Left lung (tissue), 14 donors: ENCODE measurements at regions of chr1 and their contacts with region 1.

Region 1: DNA sequence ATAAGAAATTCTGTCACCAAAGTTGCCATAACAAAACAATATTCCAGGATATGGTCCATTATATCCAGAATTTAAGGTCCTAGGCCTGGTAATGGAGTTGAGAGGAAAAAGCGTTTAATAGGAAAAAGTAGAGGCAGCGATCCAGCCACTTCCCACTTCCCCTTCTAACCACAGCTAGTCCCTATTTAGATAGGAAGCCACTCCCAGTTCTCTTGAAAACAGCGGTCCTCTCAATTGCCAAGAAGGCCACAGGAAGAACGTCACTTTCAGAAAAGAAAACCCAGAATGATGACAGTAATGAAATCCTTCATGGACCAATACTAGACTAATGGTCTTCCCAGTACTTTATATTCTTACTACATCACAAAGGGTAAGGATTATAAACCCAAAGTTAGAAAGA is 38.6 kb downstream of the ABL2 start:
- DNase-seq: no peak
- ATAC-seq: peak; percentile 76
- H3K4me3 ChIP-seq: no peak overlapping the region
- H3K27ac ChIP-seq: peak overlapping the region; percentile 57 to 73
- H3K4me1 ChIP-seq: peaks cover 0 to 28% of the 10 kb centered on the region in 2 donors
- H3K27me3 ChIP-seq: no peaks in the 10 kb centered on the region
- CTCF ChIP-seq: no peak

Region 2: GRCh38 chr1:178224358-178224757 is 966.5 kb before region 1 on chr1:
- intact Hi-C with region 1: no loop called
- DNase-seq: no peak
- ATAC-seq: no peak
- H3K4me3 ChIP-seq: no peak overlapping the region
- H3K27ac ChIP-seq: no peak overlapping the region
- H3K4me1 ChIP-seq: peaks cover 0 to 3% of the 10 kb centered on the region in 2 donors
- H3K27me3 ChIP-seq: no peaks in the 10 kb centered on the region
- CTCF ChIP-seq: no peak

Region 3: DNA sequence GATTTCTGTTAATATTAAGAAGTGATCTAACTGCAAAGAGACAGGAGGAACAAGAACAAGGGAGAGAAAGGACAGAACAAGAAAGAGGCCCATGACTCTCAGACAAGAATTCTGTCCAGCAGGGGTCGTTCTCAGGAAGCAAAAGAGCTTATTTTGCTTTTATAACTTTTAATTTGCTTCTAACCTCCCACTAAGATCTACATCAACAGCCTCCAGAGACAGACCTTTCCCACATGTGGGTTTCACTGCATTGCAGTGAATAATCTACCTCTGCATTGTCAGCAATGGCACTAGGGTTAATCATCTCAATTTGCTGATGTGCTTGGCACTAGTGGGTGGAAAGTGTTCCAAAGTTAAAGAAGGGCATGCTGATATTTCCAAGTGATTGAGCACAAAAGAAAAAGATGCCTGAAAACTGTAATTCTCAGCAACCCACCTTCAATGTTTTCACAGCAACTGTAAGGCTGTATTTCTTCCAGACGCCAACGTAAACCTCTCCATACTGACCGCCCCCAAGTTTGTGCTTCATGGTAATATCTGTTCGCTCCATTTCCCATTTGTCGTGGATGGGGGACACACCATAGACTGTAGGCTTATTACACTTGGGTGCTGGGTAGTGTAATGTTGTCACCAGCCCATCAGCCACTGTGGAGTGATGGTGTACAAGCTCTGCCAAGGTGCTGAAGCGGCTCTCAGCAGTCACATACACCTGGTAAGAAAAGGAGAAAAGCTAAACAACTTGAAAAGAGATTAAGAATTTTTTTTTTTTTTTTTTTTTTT is 69.5 kb before region 1 on chr1:
- intact Hi-C with region 1: loop called in 1 of 2 experiments (anchors 5 kb)
- DNase-seq: peak in 2 of 4 donors; percentile 28 to 53
- ATAC-seq: peak; percentile 45
- H3K4me3 ChIP-seq: no peak overlapping the region
- H3K27ac ChIP-seq: no peak overlapping the region
- H3K4me1 ChIP-seq: peaks cover 0 to 2% of the 10 kb centered on the region in 2 donors
- H3K27me3 ChIP-seq: no peaks in the 10 kb centered on the region
- CTCF ChIP-seq: peak; percentile 33 to 43

Region 4: DNA sequence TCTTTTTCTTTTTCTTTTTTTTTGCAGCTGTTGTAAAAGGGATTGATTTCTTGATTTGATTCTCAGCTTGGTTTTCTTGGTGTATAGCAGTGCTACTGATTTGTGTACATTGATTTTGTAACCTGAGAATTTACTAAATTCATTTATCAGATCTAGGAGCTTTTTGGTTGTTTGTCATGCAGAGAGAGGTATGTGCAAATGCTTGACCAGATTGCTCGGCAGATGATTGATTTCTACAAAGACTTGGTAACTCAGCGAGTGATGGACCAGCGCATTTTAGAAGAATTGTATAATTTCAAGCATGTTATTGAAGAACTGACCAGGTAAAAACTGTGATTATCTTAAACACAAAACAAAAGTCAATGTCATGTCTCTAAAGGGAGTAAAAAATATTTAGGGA is 202.9 kb after region 1 on chr1:
- intact Hi-C with region 1: no loop called
- DNase-seq: no peak
- ATAC-seq: no peak
- H3K4me3 ChIP-seq: no peak overlapping the region
- H3K27ac ChIP-seq: no peak overlapping the region
- H3K4me1 ChIP-seq: no peaks in the 10 kb centered on the region
- H3K27me3 ChIP-seq: no peaks in the 10 kb centered on the region
- CTCF ChIP-seq: no peak